WTC11 (cell line): ENCODE measurements at regions of chr2 and their contacts with region 1.

Region 1: GRCh38 chr2:181904022-181904632 is 12.6 kb downstream of the ITPRID2 start:
- DNase-seq: no peak
- ATAC-seq: no peak; the same call in 1 of the 2 replicates
- H3K4me3 Mint-ChIP-seq: no peak overlapping the region
- H3K27ac Mint-ChIP-seq: peak overlapping the region; percentile 24; the same call in 1 of the 2 replicates
- H3K4me1 Mint-ChIP-seq: no peaks in the 10 kb centered on the region
- H3K27me3 Mint-ChIP-seq: no peaks in the 10 kb centered on the region
- CTCF ChIP-seq: peak; percentile 30; the same call in 1 of the 2 replicates

Region 2: DNA sequence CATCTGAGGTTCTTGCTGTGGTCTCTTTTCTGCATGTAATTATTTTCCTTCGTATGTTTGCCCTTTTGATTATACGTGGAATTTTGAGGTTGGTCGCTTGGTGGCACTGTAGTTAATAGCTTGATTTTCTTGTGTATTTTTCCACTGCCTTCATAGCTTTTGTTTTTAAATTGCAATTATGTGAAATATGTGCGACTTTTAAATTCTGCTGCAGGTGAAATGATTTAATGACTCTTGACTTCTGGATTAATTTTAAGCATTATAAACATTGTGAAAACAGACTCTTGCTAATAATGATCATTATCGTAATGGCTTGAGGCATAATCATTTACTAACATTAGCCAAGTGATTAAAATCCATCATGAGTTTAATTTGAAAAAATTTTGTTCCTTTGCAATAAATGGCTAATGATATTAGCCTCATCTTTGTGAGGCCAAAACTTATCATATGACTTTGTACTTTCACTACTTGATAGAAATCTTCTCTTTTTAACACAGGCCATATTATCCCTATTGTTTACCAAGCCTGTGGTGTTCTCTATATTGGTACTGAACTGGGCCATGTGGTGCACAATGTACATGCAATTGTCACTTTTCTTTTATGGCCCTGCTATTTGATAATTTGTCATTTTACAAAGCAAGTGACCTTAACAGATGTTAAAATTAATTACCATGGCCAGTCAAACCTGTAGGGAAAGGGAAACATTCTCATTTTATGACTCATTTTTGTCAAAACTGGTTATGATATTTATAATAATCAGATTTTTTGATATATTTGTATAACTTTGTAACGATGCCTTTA is 161.0 kb before region 1 on chr2:
- CTCF ChIA-PET with region 1: interaction called, 13 read pairs
- POLR2A ChIA-PET with region 1: no interaction called
- DNase-seq: no peak
- ATAC-seq: peak; percentile 38; the same call in 1 of the 2 replicates
- H3K4me3 Mint-ChIP-seq: no peak overlapping the region
- H3K27ac Mint-ChIP-seq: no peak overlapping the region
- H3K4me1 Mint-ChIP-seq: peaks cover 3% of the 10 kb centered on the region; the same call in 1 of the 2 replicates
- H3K27me3 Mint-ChIP-seq: no peaks in the 10 kb centered on the region
- CTCF ChIP-seq: no peak